ENCODE measurements at regions of chr10 and their contacts with region 1.

Region 1: GRCh38 chr10:13371897-13372470 is 23.9 kb upstream of the SEPHS1 start:
- DNase-seq: peak; percentile 41 to 66
- H3K4me3 ChIP-seq: no peak overlapping the region
- H3K27ac ChIP-seq: no peak overlapping the region
- H3K4me1 ChIP-seq: no peaks in the 10 kb centered on the region
- H3K27me3 ChIP-seq: no peaks in the 10 kb centered on the region
- CTCF ChIP-seq: peak; percentile 84

Region 2: GRCh38 chr10:12884380-12884779 is 487.6 kb before region 1 on chr10:
- CTCF ChIA-PET with region 1: no interaction called
- POLR2A ChIA-PET with region 1: no interaction called
- intact Hi-C with region 1: no loop called
- DNase-seq: no peak
- H3K4me3 ChIP-seq: no peak overlapping the region
- H3K27ac ChIP-seq: no peak overlapping the region
- H3K4me1 ChIP-seq: no peaks in the 10 kb centered on the region
- H3K27me3 ChIP-seq: no peaks in the 10 kb centered on the region
- CTCF ChIP-seq: no peak

Region 3: GRCh38 chr10:13206546-13207443 is 165.2 kb before region 1 on chr10:
- CTCF ChIA-PET with region 1: no interaction called
- POLR2A ChIA-PET with region 1: interaction called, 20 read pairs
- intact Hi-C with region 1: no loop called
- DNase-seq: no peak
- H3K4me3 ChIP-seq: no peak overlapping the region
- H3K27ac ChIP-seq: no peak overlapping the region
- H3K4me1 ChIP-seq: no peaks in the 10 kb centered on the region
- H3K27me3 ChIP-seq: no peaks in the 10 kb centered on the region
- CTCF ChIP-seq: peak; percentile 60

Region 4: DNA sequence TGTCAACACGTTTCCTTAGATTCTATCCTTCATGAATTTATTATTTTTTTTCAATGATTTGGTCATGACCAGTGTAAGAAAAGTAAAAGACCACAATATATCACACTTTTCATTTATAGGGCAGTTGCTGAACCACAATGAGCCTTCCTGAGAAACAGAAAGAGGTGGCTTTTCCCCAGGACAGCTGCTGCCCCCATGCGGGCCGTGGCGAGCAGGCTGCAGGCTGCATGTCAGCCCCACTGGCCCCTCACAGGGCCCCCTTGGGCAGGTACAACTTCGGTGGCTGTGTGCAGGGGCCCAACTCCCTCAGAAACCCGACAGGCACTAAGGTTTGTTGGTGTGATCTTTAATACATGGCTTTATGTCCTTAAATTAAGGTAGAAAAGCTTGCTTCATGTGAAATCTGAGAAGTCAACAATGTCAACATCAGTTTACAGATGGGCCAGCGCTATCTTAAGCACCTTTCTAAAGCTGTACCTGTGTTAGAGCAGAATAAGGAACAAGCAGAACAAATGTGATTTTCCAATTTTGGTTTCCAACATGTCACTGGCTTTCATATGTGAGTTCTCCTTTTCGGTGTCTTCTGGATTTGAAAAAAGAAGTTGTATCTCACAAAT is 146.2 kb after region 1 on chr10:
- CTCF ChIA-PET with region 1: no interaction called
- POLR2A ChIA-PET with region 1: no interaction called
- intact Hi-C with region 1: loop called (anchors 1 kb)
- DNase-seq: peak in 1 of 2 experiments; percentile 31
- H3K4me3 ChIP-seq: no peak overlapping the region
- H3K27ac ChIP-seq: no peak overlapping the region
- H3K4me1 ChIP-seq: no peaks in the 10 kb centered on the region
- H3K27me3 ChIP-seq: peaks cover 84% of the 10 kb centered on the region
- CTCF ChIP-seq: 0 out of 2 replicates have a peak, but pooled peaks have one; percentile 47

Region 5: GRCh38 chr10:13586676-13587355 is 214.8 kb after region 1 on chr10 and contains the start of gene PRPF18:
- CTCF ChIA-PET with region 1: interaction called, 3 read pairs
- POLR2A ChIA-PET with region 1: interaction called, 4 read pairs
- intact Hi-C with region 1: loop called (anchors 1 kb)
- DNase-seq: peak; percentile 71 to 89
- H3K4me3 ChIP-seq: peak within 1 kb of the TSS; percentile 63
- H3K27ac ChIP-seq: no peak within 1 kb of the TSS
- H3K4me1 ChIP-seq: 0 out of 2 replicates have a peak, but pooled peaks cover 6% of the 10 kb centered on the region
- H3K27me3 ChIP-seq: peaks cover 21% of the 10 kb centered on the region
- CTCF ChIP-seq: peak; percentile 78
- total RNA-seq, gene PRPF18: 18.9 and 19.1 TPM in 2 replicates

Region 6: DNA sequence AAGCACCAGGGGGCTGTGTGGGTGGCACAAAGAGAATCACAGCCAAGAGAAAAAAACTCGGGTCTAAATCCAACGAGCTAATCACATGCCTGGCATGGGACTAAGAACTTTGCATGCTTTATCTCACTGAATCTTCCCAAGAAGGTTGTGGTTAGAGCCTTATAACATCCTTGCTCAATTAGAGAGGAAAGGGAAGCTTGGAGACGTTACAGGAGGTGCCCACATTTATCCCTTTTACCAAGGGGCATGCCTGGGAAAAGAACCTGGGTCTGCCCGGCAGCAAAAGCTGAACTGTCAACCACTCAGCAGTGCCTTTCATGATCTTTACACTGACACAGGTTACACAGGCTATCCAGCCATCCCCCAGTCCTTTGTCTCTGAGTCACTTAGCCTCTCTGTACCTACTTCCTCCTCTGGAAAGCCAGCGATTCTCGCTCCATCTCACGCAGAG is 404.9 kb after region 1 on chr10:
- CTCF ChIA-PET with region 1: no interaction called
- POLR2A ChIA-PET with region 1: no interaction called
- intact Hi-C with region 1: loop called (anchors 1 kb)
- DNase-seq: peak; percentile 20 to 71
- H3K4me3 ChIP-seq: no peak overlapping the region
- H3K27ac ChIP-seq: peak overlapping the region; percentile 16; the same call in 1 of the 2 replicates
- H3K4me1 ChIP-seq: peaks cover 33% of the 10 kb centered on the region
- H3K27me3 ChIP-seq: no peaks in the 10 kb centered on the region
- CTCF ChIP-seq: no peak